ENCODE measurements at regions of chr2 and their contacts with region 1.

Region 1: GRCh38 chr2:150487537-150488429 is at the start of gene RND3:
- DNase-seq: peak; percentile 99
- H3K4me3 ChIP-seq: peak within 1 kb of the TSS; percentile 53 to 61
- H3K27ac ChIP-seq: peak within 1 kb of the TSS; percentile 86 to 89
- H3K4me1 ChIP-seq: no peaks in the 10 kb centered on the region
- H3K27me3 ChIP-seq: no peaks in the 10 kb centered on the region
- CTCF ChIP-seq: peak; percentile 80 to 92 (median 90)
- POLR2A ChIP-seq: peak; percentile 90
- total RNA-seq, gene RND3: 26.2 to 54.7 TPM

Region 2: DNA sequence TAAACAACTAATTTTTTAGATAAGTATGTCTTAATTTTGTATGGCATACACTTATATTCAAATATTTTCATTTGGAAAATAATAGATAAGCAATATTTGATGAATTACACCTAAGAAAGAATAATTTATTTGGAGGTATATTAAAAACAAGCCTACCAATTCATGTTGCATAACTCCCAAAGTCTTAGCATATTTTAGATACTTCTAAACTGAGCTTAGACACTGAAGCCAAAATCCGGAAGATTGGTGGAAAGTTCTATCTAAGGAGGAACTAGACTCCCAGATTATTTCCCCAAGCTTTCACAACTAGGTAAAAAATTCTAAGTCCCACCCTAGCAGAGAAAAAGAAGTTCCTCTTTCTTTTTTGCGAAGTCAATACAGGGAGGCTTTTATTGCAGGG is 679.2 kb before region 1 on chr2:
- intact Hi-C with region 1: loop called (anchors 10 kb)
- DNase-seq: no peak
- H3K4me3 ChIP-seq: no peak overlapping the region
- H3K27ac ChIP-seq: no peak overlapping the region
- H3K4me1 ChIP-seq: no peaks in the 10 kb centered on the region
- H3K27me3 ChIP-seq: no peaks in the 10 kb centered on the region
- CTCF ChIP-seq: no peak
- POLR2A ChIP-seq: no peak

Region 3: DNA sequence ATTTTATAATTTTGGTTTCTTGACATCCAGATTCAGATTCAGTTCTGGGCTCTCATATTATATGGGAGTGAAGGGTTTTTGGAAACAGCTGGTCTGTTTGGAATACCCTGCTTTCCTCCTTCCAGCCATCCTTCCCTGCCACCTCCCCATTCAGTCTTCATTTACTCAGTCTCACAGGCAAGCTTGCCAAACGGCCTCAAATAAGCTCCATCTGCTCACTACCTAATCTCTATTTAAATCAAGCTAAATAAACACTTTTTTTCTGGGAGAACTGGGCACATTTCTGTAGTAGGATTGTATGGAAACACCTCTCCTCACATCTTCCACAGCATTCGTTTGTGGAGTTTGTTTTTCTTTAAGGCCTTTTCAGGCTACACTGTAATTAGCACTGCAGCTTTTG is 147.8 kb before region 1 on chr2:
- intact Hi-C with region 1: loop called (anchors 10 kb)
- DNase-seq: peak; percentile 26
- H3K4me3 ChIP-seq: no peak overlapping the region
- H3K27ac ChIP-seq: no peak overlapping the region
- H3K4me1 ChIP-seq: peaks cover 10% of the 10 kb centered on the region
- H3K27me3 ChIP-seq: no peaks in the 10 kb centered on the region
- CTCF ChIP-seq: no peak
- POLR2A ChIP-seq: no peak

Region 4: DNA sequence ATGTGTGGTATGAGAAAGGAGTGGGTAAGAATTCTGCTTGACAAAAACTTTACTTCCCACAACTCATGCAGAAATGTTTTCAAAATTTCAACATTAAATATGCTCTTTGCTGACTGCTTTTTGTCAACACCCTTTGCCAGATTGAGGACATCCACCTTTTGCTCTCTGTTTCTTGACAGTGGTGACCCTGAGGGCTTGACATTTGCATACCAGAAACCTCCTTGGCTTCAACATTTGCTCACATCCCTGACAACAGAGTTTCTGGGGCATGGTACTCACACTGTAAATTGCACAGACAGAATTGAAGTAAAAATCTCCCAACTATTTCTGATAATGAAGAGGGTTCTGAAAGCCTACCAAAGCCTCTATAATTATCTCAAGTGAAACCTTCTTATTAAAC is 96.0 kb before region 1 on chr2:
- intact Hi-C with region 1: no loop called
- DNase-seq: no peak
- H3K4me3 ChIP-seq: no peak overlapping the region
- H3K27ac ChIP-seq: no peak overlapping the region
- H3K4me1 ChIP-seq: no peaks in the 10 kb centered on the region
- H3K27me3 ChIP-seq: no peaks in the 10 kb centered on the region
- CTCF ChIP-seq: no peak
- POLR2A ChIP-seq: no peak

Region 5: GRCh38 chr2:150610671-150611279 is 123.0 kb after region 1 on chr2:
- intact Hi-C with region 1: loop called (anchors 5 kb)
- DNase-seq: no peak
- H3K4me3 ChIP-seq: no peak overlapping the region
- H3K27ac ChIP-seq: no peak overlapping the region
- H3K4me1 ChIP-seq: no peaks in the 10 kb centered on the region
- H3K27me3 ChIP-seq: no peaks in the 10 kb centered on the region
- CTCF ChIP-seq: peak; percentile 10 to 55 (median 46)
- POLR2A ChIP-seq: no peak

Region 6: GRCh38 chr2:150750720-150751119 is 262.9 kb after region 1 on chr2:
- intact Hi-C with region 1: no loop called
- DNase-seq: no peak
- H3K4me3 ChIP-seq: no peak overlapping the region
- H3K27ac ChIP-seq: no peak overlapping the region
- H3K4me1 ChIP-seq: no peaks in the 10 kb centered on the region
- H3K27me3 ChIP-seq: no peaks in the 10 kb centered on the region
- CTCF ChIP-seq: no peak
- POLR2A ChIP-seq: no peak

Region 7: DNA sequence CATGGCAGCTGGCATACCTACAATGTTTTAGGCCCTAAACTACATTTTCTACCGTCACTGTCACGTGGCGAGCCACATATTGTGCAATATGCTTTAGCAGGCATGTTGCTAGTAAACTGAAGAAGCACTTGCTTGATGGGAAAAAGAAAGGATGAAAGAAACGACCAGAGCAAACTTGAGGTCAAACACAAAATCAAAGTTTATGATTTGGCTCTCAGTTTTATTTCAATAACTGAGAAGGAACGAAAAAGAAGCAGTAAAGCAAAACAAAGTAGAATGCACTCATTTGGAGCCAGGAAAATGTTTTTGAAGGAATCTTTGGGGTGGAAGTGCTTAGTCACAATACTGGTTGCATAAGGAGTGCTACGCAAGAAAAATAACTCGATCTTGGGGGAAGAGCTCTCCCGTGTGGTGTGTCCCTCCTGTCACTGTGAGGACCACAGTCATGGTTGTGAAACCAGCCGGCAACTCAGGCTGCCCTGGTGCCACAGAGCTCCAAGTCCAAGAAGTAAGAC is 424.0 kb after region 1 on chr2:
- intact Hi-C with region 1: loop called (anchors 5 kb)
- DNase-seq: peak; percentile 11
- H3K4me3 ChIP-seq: no peak overlapping the region
- H3K27ac ChIP-seq: peak overlapping the region in 1 of 2 donors; percentile 25
- H3K4me1 ChIP-seq: no peaks in the 10 kb centered on the region
- H3K27me3 ChIP-seq: no peaks in the 10 kb centered on the region
- CTCF ChIP-seq: no peak
- POLR2A ChIP-seq: no peak

Region 8: GRCh38 chr2:151238527-151239487 is 751.0 kb after region 1 on chr2:
- intact Hi-C with region 1: loop called (anchors 10 kb)
- DNase-seq: peak; percentile 34
- H3K4me3 ChIP-seq: no peak overlapping the region
- H3K27ac ChIP-seq: no peak overlapping the region
- H3K4me1 ChIP-seq: no peaks in the 10 kb centered on the region
- H3K27me3 ChIP-seq: no peaks in the 10 kb centered on the region
- CTCF ChIP-seq: peak; percentile 52 to 83 (median 68)
- POLR2A ChIP-seq: no peak